Caco-2 (cell line): ENCODE measurements at regions of chr2 and their contacts with region 1.

Region 1: GRCh38 chr2:227324995-227325838 is at the start of gene MFF:
- DNase-seq: peak; percentile 87 to 89
- H3K4me3 ChIP-seq: peak within 1 kb of the TSS; percentile 71
- H3K4me3 Mint-ChIP-seq: peak within 1 kb of the TSS; percentile 80
- H3K27ac Mint-ChIP-seq: peak within 1 kb of the TSS; percentile 84
- H3K4me1 ChIP-seq: peaks cover 12% of the 10 kb centered on the region; the same call in 1 of the 2 replicates
- H3K4me1 Mint-ChIP-seq: no peaks in the 10 kb centered on the region
- H3K27me3 ChIP-seq: no peaks in the 10 kb centered on the region
- H3K27me3 Mint-ChIP-seq: no peaks in the 10 kb centered on the region
- CTCF ChIP-seq: peak in 1 of 2 experiments; percentile 26
- total RNA-seq, gene MFF: 161 TPM in 2 replicates

Region 2: DNA sequence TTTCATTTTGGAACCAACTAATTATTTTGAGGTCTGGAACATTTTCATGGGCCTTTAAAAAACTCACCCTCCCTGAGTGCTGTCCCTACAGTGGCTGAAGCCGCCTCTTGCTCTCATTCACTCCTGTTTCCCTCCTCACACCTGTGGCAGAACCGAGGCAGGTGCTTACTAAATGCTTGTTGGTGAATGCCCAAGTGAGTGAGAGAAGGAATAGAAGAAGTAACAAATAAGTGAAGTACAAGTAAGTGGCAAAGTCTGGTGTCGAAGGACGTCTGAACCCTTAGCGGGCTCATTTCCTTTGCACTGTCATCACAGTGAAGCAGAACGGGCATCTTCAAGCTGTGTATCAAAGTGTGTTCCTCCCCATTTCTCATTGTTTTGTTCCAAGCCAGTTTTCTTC is 354.1 kb before region 1 on chr2:
- CTCF ChIA-PET with region 1: no interaction called
- POLR2A ChIA-PET with region 1: no interaction called
- intact Hi-C with region 1: no loop called
- DNase-seq: no peak
- H3K4me3 ChIP-seq: no peak overlapping the region
- H3K4me3 Mint-ChIP-seq: no peak overlapping the region
- H3K27ac Mint-ChIP-seq: no peak overlapping the region
- H3K4me1 ChIP-seq: no peaks in the 10 kb centered on the region
- H3K4me1 Mint-ChIP-seq: no peaks in the 10 kb centered on the region
- H3K27me3 ChIP-seq: no peaks in the 10 kb centered on the region
- H3K27me3 Mint-ChIP-seq: no peaks in the 10 kb centered on the region
- CTCF ChIP-seq: no peak

Region 3: DNA sequence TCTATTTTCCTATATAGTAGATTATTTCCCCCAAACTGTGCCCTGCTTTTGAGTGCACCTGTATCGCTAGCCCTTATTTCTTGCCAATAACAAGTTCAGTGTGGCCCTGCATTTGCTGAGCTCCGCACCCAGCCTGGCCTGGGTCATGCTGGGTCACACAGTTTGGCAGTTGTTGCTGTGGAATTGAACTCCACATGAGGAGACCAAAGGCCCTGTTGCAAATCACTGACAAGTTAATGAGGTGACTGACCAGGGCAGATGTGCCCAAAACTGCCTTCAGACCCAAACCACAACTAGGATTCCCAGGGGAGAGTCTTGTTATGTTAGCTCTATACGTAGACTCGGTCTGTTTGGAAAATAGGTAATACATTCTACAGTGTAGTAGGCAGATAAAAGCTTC is 192.2 kb before region 1 on chr2:
- CTCF ChIA-PET with region 1: no interaction called
- POLR2A ChIA-PET with region 1: no interaction called
- intact Hi-C with region 1: loop called (anchors 1 kb)
- DNase-seq: no peak
- H3K4me3 ChIP-seq: no peak overlapping the region
- H3K4me3 Mint-ChIP-seq: no peak overlapping the region
- H3K27ac Mint-ChIP-seq: no peak overlapping the region
- H3K4me1 ChIP-seq: no peaks in the 10 kb centered on the region; the same call in 1 of the 2 replicates
- H3K4me1 Mint-ChIP-seq: peaks cover 22% of the 10 kb centered on the region
- H3K27me3 ChIP-seq: no peaks in the 10 kb centered on the region
- H3K27me3 Mint-ChIP-seq: no peaks in the 10 kb centered on the region
- CTCF ChIP-seq: no peak

Region 4: GRCh38 chr2:227163998-227164762 is 161.0 kb before region 1 on chr2 and contains the starts of genes COL4A3 and COL4A4:
- CTCF ChIA-PET with region 1: no interaction called
- POLR2A ChIA-PET with region 1: no interaction called
- intact Hi-C with region 1: loop called (anchors 10 kb)
- DNase-seq: peak in 1 of 2 experiments; percentile 70
- H3K4me3 ChIP-seq: peak within 1 kb of the TSS; percentile 62
- H3K4me3 Mint-ChIP-seq: peak within 1 kb of the TSS; percentile 76
- H3K27ac Mint-ChIP-seq: no peak within 1 kb of the TSS
- H3K4me1 ChIP-seq: no peaks in the 10 kb centered on the region
- H3K4me1 Mint-ChIP-seq: no peaks in the 10 kb centered on the region
- H3K27me3 ChIP-seq: no peaks in the 10 kb centered on the region
- H3K27me3 Mint-ChIP-seq: peaks cover 4% of the 10 kb centered on the region
- CTCF ChIP-seq: no peak
- total RNA-seq, gene COL4A3: 4.2 and 4.7 TPM in 2 replicates
- total RNA-seq, gene COL4A4: 8.7 and 9.5 TPM in 2 replicates

Region 5: GRCh38 chr2:227238238-227239237 is 86.7 kb before region 1 on chr2:
- CTCF ChIA-PET with region 1: interaction called, 4 read pairs
- POLR2A ChIA-PET with region 1: no interaction called
- intact Hi-C with region 1: loop called (anchors 2 kb)
- DNase-seq: peak; percentile 61 to 72
- H3K4me3 ChIP-seq: no peak overlapping the region
- H3K4me3 Mint-ChIP-seq: no peak overlapping the region
- H3K27ac Mint-ChIP-seq: no peak overlapping the region
- H3K4me1 ChIP-seq: peaks cover 6% of the 10 kb centered on the region; the same call in 1 of the 2 replicates
- H3K4me1 Mint-ChIP-seq: peaks cover 16% of the 10 kb centered on the region
- H3K27me3 ChIP-seq: no peaks in the 10 kb centered on the region
- H3K27me3 Mint-ChIP-seq: no peaks in the 10 kb centered on the region
- CTCF ChIP-seq: peak; percentile 69 to 75

Region 6: DNA sequence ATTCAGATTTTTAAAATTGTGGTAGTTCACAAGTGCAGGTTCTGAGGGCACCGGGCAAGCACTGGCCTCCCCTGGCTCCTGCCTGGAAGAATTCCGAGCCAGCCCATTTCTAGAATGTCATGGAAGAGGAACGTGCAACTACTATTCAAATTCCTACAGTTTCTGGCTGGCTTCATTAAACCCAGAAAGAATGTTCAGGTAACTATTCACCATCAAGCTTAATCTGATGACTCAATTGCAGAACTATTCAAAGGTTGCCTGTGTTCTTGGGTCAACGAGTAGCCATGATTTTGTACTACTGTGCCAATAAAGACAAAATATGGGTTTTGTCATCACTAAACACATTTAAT is 14.5 kb before region 1 on chr2:
- CTCF ChIA-PET with region 1: interaction called, 3 read pairs
- POLR2A ChIA-PET with region 1: no interaction called
- intact Hi-C with region 1: loop called (anchors 1 kb)
- DNase-seq: no peak
- H3K4me3 ChIP-seq: no peak overlapping the region
- H3K4me3 Mint-ChIP-seq: no peak overlapping the region
- H3K27ac Mint-ChIP-seq: peak overlapping the region; percentile 71
- H3K4me1 ChIP-seq: peaks cover 62% of the 10 kb centered on the region
- H3K4me1 Mint-ChIP-seq: peaks cover 20% of the 10 kb centered on the region
- H3K27me3 ChIP-seq: no peaks in the 10 kb centered on the region
- H3K27me3 Mint-ChIP-seq: no peaks in the 10 kb centered on the region
- CTCF ChIP-seq: no peak

Region 7: GRCh38 chr2:227339098-227339599 is 13.9 kb after region 1 on chr2:
- CTCF ChIA-PET with region 1: interaction called, 3 read pairs
- POLR2A ChIA-PET with region 1: interaction called, 13 read pairs
- intact Hi-C with region 1: no loop called
- DNase-seq: peak in 1 of 2 experiments; percentile 12
- H3K4me3 ChIP-seq: no peak overlapping the region
- H3K4me3 Mint-ChIP-seq: no peak overlapping the region
- H3K27ac Mint-ChIP-seq: no peak overlapping the region
- H3K4me1 ChIP-seq: peaks cover 4% of the 10 kb centered on the region
- H3K4me1 Mint-ChIP-seq: no peaks in the 10 kb centered on the region
- H3K27me3 ChIP-seq: no peaks in the 10 kb centered on the region
- H3K27me3 Mint-ChIP-seq: no peaks in the 10 kb centered on the region
- CTCF ChIP-seq: no peak